Right ventricle myocardium superior (tissue), 1 donor: ENCODE measurements at regions of chr10 and their contacts with region 1.

Region 1: GRCh38 chr10:12068449-12069269 is at the start of gene DHTKD1:
- DNase-seq: peak; percentile 99
- ATAC-seq: peak; percentile 99
- total RNA-seq, gene DHTKD1: 22.8 TPM

Region 2: GRCh38 chr10:12042797-12043651 is 25.6 kb before region 1 on chr10 and contains the start of gene UPF2:
- intact Hi-C with region 1: loop called (anchors 2 kb)
- DNase-seq: peak; percentile 97
- ATAC-seq: peak; percentile 97
- total RNA-seq, gene UPF2: 19.8 TPM